CD4-positive, alpha-beta memory T cell (primary cell): ENCODE measurements at regions of chr14 and their contacts with region 1.

Region 1: GRCh38 chr14:24215495-24216344 is at the start of gene MDP1:
- DNase-seq: peak; percentile 86 to 92 (median 88)
- H3K4me3 ChIP-seq: peak within 1 kb of the TSS; percentile 94 to 95
- H3K4me3 Mint-ChIP-seq: peak within 1 kb of the TSS; percentile 90 to 97 (median 93)
- H3K27ac ChIP-seq: peak within 1 kb of the TSS; percentile 100
- H3K27ac Mint-ChIP-seq: peak within 1 kb of the TSS; percentile 95 to 100 (median 99)
- H3K4me1 ChIP-seq: peaks cover 42% of the 10 kb centered on the region
- H3K4me1 Mint-ChIP-seq: peaks cover 30 to 56% (median 44%) of the 10 kb centered on the region in 4 donors
- H3K27me3 ChIP-seq: no peaks in the 10 kb centered on the region
- H3K27me3 Mint-ChIP-seq: no peaks in the 10 kb centered on the region
- total RNA-seq, gene MDP1: 12.5 to 15.3 TPM

Region 2: GRCh38 chr14:24141097-24141880 is 74.4 kb before region 1 on chr14 and contains the start of gene EMC9:
- CTCF ChIA-PET with region 1: interaction called, 4 read pairs
- POLR2A ChIA-PET with region 1: interaction called, 21 read pairs
- intact Hi-C with region 1: loop called (anchors 1 kb)
- DNase-seq: peak; percentile 98 to 100 (median 99)
- H3K4me3 ChIP-seq: peak within 1 kb of the TSS; percentile 83 to 91
- H3K4me3 Mint-ChIP-seq: peak within 1 kb of the TSS; percentile 85 to 97 (median 94)
- H3K27ac ChIP-seq: peak within 1 kb of the TSS; percentile 77
- H3K27ac Mint-ChIP-seq: peak within 1 kb of the TSS; percentile 76 to 95 (median 94)
- H3K4me1 ChIP-seq: peaks cover 74% of the 10 kb centered on the region
- H3K4me1 Mint-ChIP-seq: peaks cover 38 to 94% (median 61%) of the 10 kb centered on the region in 4 donors
- H3K27me3 ChIP-seq: no peaks in the 10 kb centered on the region
- H3K27me3 Mint-ChIP-seq: no peaks in the 10 kb centered on the region
- total RNA-seq, gene EMC9: 33.0 to 33.9 TPM

Region 3: GRCh38 chr14:24171422-24172260 is 44.1 kb before region 1 on chr14 and contains the start of gene REC8:
- CTCF ChIA-PET with region 1: no interaction called
- POLR2A ChIA-PET with region 1: interaction called, 14 read pairs
- intact Hi-C with region 1: no loop called
- DNase-seq: peak; percentile 66 to 84 (median 73)
- H3K4me3 ChIP-seq: peak within 1 kb of the TSS in 1 of 2 donors; percentile 26
- H3K4me3 Mint-ChIP-seq: peak within 1 kb of the TSS; percentile 82 to 91 (median 87)
- H3K27ac ChIP-seq: peak within 1 kb of the TSS; percentile 42
- H3K27ac Mint-ChIP-seq: peak within 1 kb of the TSS; percentile 63 to 88 (median 85)
- H3K4me1 ChIP-seq: peaks cover 22% of the 10 kb centered on the region
- H3K4me1 Mint-ChIP-seq: peaks cover 20 to 56% (median 35%) of the 10 kb centered on the region in 4 donors
- H3K27me3 ChIP-seq: no peaks in the 10 kb centered on the region
- H3K27me3 Mint-ChIP-seq: no peaks in the 10 kb centered on the region
- total RNA-seq, gene REC8: 27.7 to 30.5 TPM

Region 4: GRCh38 chr14:24232121-24232644 is 16.5 kb after region 1 on chr14 and contains the start of gene NEDD8:
- CTCF ChIA-PET with region 1: interaction called, 10 read pairs
- POLR2A ChIA-PET with region 1: interaction called, 88 read pairs
- intact Hi-C with region 1: loop called (anchors 1 kb)
- DNase-seq: peak; percentile 89 to 96 (median 89)
- H3K4me3 ChIP-seq: peak within 1 kb of the TSS; percentile 100
- H3K4me3 Mint-ChIP-seq: peak within 1 kb of the TSS; percentile 97 to 99 (median 98)
- H3K27ac ChIP-seq: peak within 1 kb of the TSS; percentile 88
- H3K27ac Mint-ChIP-seq: peak within 1 kb of the TSS; percentile 95 to 99 (median 97)
- H3K4me1 ChIP-seq: peaks cover 41% of the 10 kb centered on the region
- H3K4me1 Mint-ChIP-seq: peaks cover 41 to 68% (median 54%) of the 10 kb centered on the region in 4 donors
- H3K27me3 ChIP-seq: no peaks in the 10 kb centered on the region
- H3K27me3 Mint-ChIP-seq: no peaks in the 10 kb centered on the region
- total RNA-seq, gene NEDD8: 116 to 127 TPM

Region 5: DNA sequence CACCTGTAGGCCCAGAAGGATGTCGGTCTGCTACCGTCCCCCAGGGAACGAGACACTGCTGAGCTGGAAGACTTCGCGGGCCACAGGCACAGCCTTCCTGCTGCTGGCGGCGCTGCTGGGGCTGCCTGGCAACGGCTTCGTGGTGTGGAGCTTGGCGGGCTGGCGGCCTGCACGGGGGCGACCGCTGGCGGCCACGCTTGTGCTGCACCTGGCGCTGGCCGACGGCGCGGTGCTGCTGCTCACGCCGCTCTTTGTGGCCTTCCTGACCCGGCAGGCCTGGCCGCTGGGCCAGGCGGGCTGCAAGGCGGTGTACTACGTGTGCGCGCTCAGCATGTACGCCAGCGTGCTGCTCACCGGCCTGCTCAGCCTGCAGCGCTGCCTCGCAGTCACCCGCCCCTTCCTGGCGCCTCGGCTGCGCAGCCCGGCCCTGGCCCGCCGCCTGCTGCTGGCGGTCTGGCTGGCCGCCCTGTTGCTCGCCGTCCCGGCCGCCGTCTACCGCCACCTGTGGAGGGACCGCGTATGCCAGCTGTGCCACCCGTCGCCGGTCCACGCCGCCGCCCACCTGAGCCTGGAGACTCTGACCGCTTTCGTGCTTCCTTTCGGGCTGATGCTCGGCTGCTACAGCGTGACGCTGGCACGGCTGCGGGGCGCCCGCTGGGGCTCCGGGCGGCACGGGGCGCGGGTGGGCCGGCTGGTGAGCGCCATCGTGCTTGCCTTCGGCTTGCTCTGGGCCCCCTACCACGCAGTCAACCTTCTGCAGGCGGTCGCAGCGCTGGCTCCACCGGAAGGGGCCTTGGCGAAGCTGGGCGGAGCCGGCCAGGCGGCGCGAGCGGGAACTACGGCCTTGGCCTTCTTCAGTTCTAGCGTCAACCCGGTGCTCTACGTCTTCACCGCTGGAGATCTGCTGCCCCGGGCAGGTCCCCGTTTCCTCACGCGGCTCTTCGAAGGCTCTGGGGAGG is 95.2 kb after region 1 on chr14 and contains the start of gene LTB4R:
- CTCF ChIA-PET with region 1: interaction called, 13 read pairs
- POLR2A ChIA-PET with region 1: interaction called, 24 read pairs
- intact Hi-C with region 1: no loop called
- DNase-seq: peak; percentile 73 to 79 (median 77)
- H3K4me3 ChIP-seq: peak within 1 kb of the TSS; percentile 55 to 58
- H3K4me3 Mint-ChIP-seq: peak within 1 kb of the TSS; percentile 83 to 94 (median 88)
- H3K27ac ChIP-seq: peak within 1 kb of the TSS; percentile 72
- H3K27ac Mint-ChIP-seq: peak within 1 kb of the TSS; percentile 90 to 97 (median 95)
- H3K4me1 ChIP-seq: peaks cover 71% of the 10 kb centered on the region
- H3K4me1 Mint-ChIP-seq: peaks cover 58 to 89% (median 72%) of the 10 kb centered on the region in 4 donors
- H3K27me3 ChIP-seq: no peaks in the 10 kb centered on the region
- H3K27me3 Mint-ChIP-seq: no peaks in the 10 kb centered on the region
- total RNA-seq, gene LTB4R: 19.5 to 20.0 TPM